Mammary epithelial cell (primary cell): ENCODE measurements at regions of chr1 and their contacts with region 1.

Region 1: DNA sequence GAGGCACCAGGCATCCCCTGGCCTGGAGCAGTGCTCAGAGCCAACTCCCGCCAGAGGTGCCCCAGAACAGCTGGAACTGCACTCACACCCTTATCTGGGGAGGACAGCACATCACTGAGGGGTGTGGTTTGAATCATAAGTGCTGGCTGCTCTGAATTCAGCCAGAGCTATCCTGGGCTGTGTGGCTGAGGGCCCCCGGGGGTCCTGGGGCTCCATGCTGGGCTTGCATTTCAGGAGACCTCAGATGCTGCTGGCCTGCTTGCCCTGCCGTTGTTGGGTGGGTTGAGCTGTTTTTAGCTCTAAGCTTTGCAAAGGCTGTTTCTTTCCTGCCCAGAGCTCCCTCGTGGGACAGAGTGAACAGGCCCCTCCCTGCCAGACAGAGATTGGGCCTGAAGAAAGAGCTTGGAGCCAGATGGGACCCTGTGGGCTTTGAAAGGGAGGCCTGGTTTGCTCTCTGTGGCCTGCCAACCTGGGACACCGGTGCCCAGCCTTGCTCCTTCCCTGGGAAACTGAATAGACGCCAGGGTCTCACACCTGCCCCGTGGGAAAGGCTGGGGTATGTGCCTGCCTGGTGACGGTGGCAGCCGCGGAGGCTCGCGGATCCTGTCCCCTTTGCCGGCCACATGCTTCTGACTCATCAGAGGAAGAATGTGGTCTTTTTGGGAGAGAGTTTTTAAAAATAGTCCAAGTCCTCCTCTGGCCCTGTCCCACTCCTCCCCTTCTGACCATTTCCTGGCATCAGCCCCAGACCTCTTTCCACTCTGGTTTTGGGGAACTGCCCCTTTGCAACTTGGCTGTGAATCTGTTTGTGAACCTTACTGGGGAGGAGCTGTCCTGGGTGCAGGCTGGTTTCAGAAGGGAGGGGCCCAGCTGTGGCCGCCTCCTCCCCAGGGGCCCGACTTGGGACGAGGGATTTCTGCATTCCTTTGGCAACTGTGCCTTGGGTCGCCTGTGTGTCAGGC is 30.0 kb downstream of the ARHGEF10L start:
- DNase-seq: peak; percentile 36
- H3K4me3 ChIP-seq: no peak overlapping the region
- H3K27ac ChIP-seq: no peak overlapping the region
- H3K4me1 ChIP-seq: peaks cover 11% of the 10 kb centered on the region
- H3K27me3 ChIP-seq: no peaks in the 10 kb centered on the region
- CTCF ChIP-seq: no peak

Region 2: GRCh38 chr1:17419626-17420328 is 149.7 kb before region 1 on chr1:
- CTCF ChIA-PET with region 1: no interaction called
- dilution Hi-C with region 1: no loop called
- in situ Hi-C with region 1: no loop called
- intact Hi-C with region 1: no loop called
- DNase-seq: peak; percentile 30
- H3K4me3 ChIP-seq: no peak overlapping the region
- H3K27ac ChIP-seq: no peak overlapping the region
- H3K4me1 ChIP-seq: no peaks in the 10 kb centered on the region
- H3K27me3 ChIP-seq: no peaks in the 10 kb centered on the region
- CTCF ChIP-seq: peak; percentile 83 to 99

Region 3: GRCh38 chr1:17520071-17520813 is 49.2 kb before region 1 on chr1:
- CTCF ChIA-PET with region 1: no interaction called
- dilution Hi-C with region 1: no loop called
- in situ Hi-C with region 1: no loop called
- intact Hi-C with region 1: no loop called
- DNase-seq: peak; percentile 90
- H3K4me3 ChIP-seq: no peak overlapping the region
- H3K27ac ChIP-seq: no peak overlapping the region
- H3K4me1 ChIP-seq: peaks cover 12% of the 10 kb centered on the region
- H3K27me3 ChIP-seq: no peaks in the 10 kb centered on the region
- CTCF ChIP-seq: no peak

Region 4: DNA sequence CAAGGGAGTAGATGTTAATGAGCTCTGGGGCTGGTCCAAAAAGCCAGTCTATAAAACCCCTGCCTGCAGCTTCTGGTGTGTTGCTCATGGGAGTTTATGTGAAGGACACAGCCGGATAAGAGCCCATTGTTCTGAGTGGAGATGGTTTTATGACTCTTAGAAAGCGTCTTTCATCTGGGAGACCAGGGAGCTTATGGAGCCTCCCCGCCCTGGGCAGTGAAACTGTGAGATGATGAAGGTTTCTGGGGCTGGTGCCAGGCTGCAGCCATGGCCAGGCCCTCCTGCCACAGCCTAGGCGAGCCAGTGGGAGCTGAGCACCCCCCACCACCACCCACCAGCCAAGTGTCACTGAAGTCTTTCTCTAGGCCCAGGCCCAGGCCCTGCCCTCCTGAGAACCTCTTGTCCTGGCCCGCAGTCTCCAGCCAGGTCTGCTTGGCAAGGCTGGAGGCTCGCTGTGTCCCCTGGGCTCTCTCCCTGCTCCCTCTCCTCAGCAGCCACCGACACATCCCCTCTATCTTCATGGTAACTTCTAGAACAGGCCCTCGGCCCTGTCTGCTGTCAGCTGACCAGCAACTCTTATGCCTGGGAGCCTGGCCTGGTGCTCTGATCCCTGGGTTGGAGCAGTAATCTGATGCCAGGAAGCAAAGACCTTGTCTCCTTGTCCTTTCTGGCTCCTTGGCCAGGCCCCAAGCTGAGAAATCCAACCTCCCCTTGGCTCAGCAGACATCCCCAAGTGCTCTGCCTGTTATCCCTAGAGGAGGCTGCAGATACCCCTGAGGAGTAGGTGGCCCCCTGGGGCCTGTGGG is 37.6 kb before region 1 on chr1:
- CTCF ChIA-PET with region 1: no interaction called
- dilution Hi-C with region 1: loop called (anchors 5 kb)
- in situ Hi-C with region 1: no loop called
- intact Hi-C with region 1: no loop called
- DNase-seq: peak; percentile 75
- H3K4me3 ChIP-seq: no peak overlapping the region
- H3K27ac ChIP-seq: no peak overlapping the region
- H3K4me1 ChIP-seq: no peaks in the 10 kb centered on the region
- H3K27me3 ChIP-seq: peaks cover 2% of the 10 kb centered on the region
- CTCF ChIP-seq: no peak

Region 5: GRCh38 chr1:18661404-18662284 is 1092.2 kb after region 1 on chr1:
- CTCF ChIA-PET with region 1: no interaction called
- dilution Hi-C with region 1: no loop called
- in situ Hi-C with region 1: no loop called
- intact Hi-C with region 1: no loop called
- DNase-seq: no peak
- H3K4me3 ChIP-seq: no peak overlapping the region
- H3K27ac ChIP-seq: no peak overlapping the region
- H3K4me1 ChIP-seq: peaks cover 6% of the 10 kb centered on the region
- H3K27me3 ChIP-seq: no peaks in the 10 kb centered on the region
- CTCF ChIP-seq: no peak